ENCODE measurements at regions of chr15 and their contacts with region 1.

Region 1: DNA sequence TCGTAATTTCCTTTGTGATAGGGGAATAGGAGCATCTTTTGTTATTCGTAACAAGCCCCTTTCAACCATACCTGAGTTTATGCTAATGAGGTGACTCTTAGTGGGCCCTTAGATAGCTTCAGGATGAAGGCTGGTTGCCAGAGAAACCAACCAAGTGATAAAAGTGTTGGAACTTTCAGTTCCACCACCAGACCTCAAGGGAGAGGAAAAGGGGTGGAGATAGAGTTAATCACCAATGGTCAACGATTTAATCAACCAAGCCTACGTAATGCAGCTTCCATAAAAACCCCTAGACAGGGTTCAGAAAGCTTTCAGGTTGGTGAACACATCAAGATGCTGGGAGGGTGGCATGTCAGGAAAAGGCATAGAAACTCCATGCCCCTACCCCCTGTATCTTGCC is 33.0 kb downstream of the HERC1 start:
- DNase-seq: no peak
- ATAC-seq: no peak
- H3K4me3 Mint-ChIP-seq: no peak overlapping the region
- H3K27ac Mint-ChIP-seq: peak overlapping the region; percentile 7
- H3K4me1 Mint-ChIP-seq: peaks cover 83% of the 10 kb centered on the region
- H3K27me3 Mint-ChIP-seq: no peaks in the 10 kb centered on the region
- CTCF ChIP-seq: no peak

Region 2: DNA sequence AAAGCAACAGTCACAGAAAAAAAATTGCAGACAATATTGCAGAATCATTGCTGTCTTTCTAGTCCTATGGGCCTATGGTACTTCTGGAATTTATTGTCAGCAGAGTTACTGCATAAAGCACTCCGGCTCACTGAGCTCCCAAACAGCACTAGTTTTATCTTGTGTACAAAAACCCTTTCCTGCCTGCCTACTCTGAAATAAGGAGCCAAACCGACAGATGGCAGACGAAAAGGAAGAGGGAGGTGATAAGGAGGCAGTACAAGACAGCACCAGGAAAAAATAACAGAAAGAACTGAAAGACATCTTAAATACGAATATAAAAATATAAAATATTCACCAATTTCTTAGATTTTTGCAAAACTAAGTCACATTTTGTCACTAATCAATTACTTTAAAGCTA is 17.5 kb after region 1 on chr15:
- CTCF ChIA-PET with region 1: no interaction called
- POLR2A ChIA-PET with region 1: interaction called, 9 read pairs
- intact Hi-C with region 1: loop called (anchors 2 kb)
- DNase-seq: no peak
- ATAC-seq: no peak
- H3K4me3 Mint-ChIP-seq: no peak overlapping the region
- H3K27ac Mint-ChIP-seq: no peak overlapping the region
- H3K4me1 Mint-ChIP-seq: peaks cover 72% of the 10 kb centered on the region
- H3K27me3 Mint-ChIP-seq: no peaks in the 10 kb centered on the region
- CTCF ChIP-seq: no peak